CD8-positive, alpha-beta T cell (primary cell): ENCODE measurements at regions of chr1 and their contacts with region 1.

Region 1: GRCh38 chr1:44631647-44632539 is 42.4 kb downstream of the TMEM53 start:
- DNase-seq: peak; percentile 73 to 95 (median 88)
- ATAC-seq: peak; percentile 75
- H3K4me3 ChIP-seq: peak overlapping the region; percentile 55 to 82
- H3K4me3 Mint-ChIP-seq: peak overlapping the region; percentile 90
- H3K27ac ChIP-seq: peak overlapping the region; percentile 86 to 97
- H3K27ac Mint-ChIP-seq: peak overlapping the region; percentile 98
- H3K4me1 ChIP-seq: peaks cover 20% of the 10 kb centered on the region
- H3K4me1 Mint-ChIP-seq: peaks cover 48% of the 10 kb centered on the region
- H3K27me3 ChIP-seq: no peaks in the 10 kb centered on the region
- H3K27me3 Mint-ChIP-seq: no peaks in the 10 kb centered on the region
- CTCF ChIP-seq: no peak

Region 2: DNA sequence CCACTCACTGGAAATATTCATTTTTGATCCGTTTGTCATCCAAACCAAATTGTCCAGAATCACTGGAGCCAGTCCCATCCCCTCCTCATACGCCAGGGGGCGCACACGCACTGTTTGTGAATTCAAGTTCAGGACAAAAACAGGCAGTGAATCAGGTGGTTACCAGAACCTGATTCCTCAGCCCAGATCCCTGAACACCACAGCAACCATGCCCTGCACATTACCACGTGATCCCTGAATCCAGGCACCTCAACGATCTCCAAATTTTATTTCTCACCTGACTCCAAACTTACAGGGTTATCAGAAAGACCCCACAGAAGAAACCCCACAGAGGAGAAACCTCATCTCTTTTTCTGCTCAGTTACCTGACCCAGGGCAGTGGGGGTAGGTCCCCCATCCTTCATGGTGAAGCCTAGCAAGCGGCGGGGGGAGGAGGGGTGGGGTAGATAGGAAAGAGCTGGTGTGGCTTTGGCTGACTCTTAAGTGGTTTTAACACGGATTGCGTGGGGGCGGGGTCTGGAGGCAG is 1102.6 kb before region 1 on chr1:
- CTCF ChIA-PET with region 1: no interaction called
- POLR2A ChIA-PET with region 1: no interaction called
- intact Hi-C with region 1: no loop called
- DNase-seq: peak; percentile 60 to 89 (median 80)
- ATAC-seq: peak; percentile 65
- H3K4me3 ChIP-seq: no peak overlapping the region
- H3K4me3 Mint-ChIP-seq: peak overlapping the region; percentile 88
- H3K27ac ChIP-seq: no peak overlapping the region
- H3K27ac Mint-ChIP-seq: no peak overlapping the region
- H3K4me1 ChIP-seq: peaks cover 15% of the 10 kb centered on the region
- H3K4me1 Mint-ChIP-seq: peaks cover 21% of the 10 kb centered on the region
- H3K27me3 ChIP-seq: peaks cover 14% of the 10 kb centered on the region in 2 experiments
- H3K27me3 Mint-ChIP-seq: peaks cover 41% of the 10 kb centered on the region
- CTCF ChIP-seq: peak; percentile 96

Region 3: DNA sequence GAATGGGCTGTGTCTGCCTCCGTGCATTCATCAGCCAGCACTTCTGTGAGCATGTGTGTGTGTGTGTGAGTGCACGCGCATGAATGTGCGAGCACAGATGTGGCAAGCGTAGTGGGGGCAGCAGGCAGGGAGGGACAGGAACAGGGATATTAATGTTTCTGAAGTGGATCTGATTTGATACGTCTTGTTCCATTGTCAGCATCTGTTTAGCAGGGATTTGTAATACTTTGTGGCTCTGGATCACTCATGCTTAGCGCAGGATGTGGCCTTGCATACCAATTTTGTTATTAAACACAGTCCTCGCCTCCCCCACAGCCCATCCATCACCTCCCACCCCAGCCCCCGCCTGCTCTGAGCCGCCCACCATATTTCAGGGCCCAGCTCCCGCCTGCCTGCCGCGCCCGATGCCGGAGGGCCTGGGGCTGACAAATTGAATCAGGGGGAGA is 10.0 kb before region 1 on chr1:
- CTCF ChIA-PET with region 1: no interaction called
- POLR2A ChIA-PET with region 1: no interaction called
- intact Hi-C with region 1: no loop called
- DNase-seq: no peak
- ATAC-seq: no peak
- H3K4me3 ChIP-seq: no peak overlapping the region
- H3K4me3 Mint-ChIP-seq: no peak overlapping the region
- H3K27ac ChIP-seq: no peak overlapping the region
- H3K27ac Mint-ChIP-seq: no peak overlapping the region
- H3K4me1 ChIP-seq: no peaks in the 10 kb centered on the region
- H3K4me1 Mint-ChIP-seq: no peaks in the 10 kb centered on the region
- H3K27me3 ChIP-seq: no peaks in the 10 kb centered on the region
- H3K27me3 Mint-ChIP-seq: no peaks in the 10 kb centered on the region
- CTCF ChIP-seq: no peak

Region 4: GRCh38 chr1:44646261-44647110 is 14.6 kb after region 1 on chr1:
- CTCF ChIA-PET with region 1: interaction called, 54 read pairs
- POLR2A ChIA-PET with region 1: interaction called, 12 read pairs
- intact Hi-C with region 1: no loop called
- DNase-seq: no peak
- ATAC-seq: no peak
- H3K4me3 ChIP-seq: no peak overlapping the region
- H3K4me3 Mint-ChIP-seq: no peak overlapping the region
- H3K27ac ChIP-seq: no peak overlapping the region
- H3K27ac Mint-ChIP-seq: no peak overlapping the region
- H3K4me1 ChIP-seq: no peaks in the 10 kb centered on the region
- H3K4me1 Mint-ChIP-seq: no peaks in the 10 kb centered on the region
- H3K27me3 ChIP-seq: no peaks in the 10 kb centered on the region
- H3K27me3 Mint-ChIP-seq: no peaks in the 10 kb centered on the region
- CTCF ChIP-seq: no peak

Region 5: GRCh38 chr1:44730741-44731512 is 99.0 kb after region 1 on chr1 and contains the start of gene RNU5D-1:
- CTCF ChIA-PET with region 1: no interaction called
- POLR2A ChIA-PET with region 1: no interaction called
- intact Hi-C with region 1: no loop called
- DNase-seq: peak; percentile 86 to 96 (median 94)
- ATAC-seq: peak; percentile 75
- H3K4me3 ChIP-seq: peak within 1 kb of the TSS; percentile 36 to 47
- H3K4me3 Mint-ChIP-seq: peak within 1 kb of the TSS; percentile 84
- H3K27ac ChIP-seq: peak within 1 kb of the TSS; percentile 98 to 99
- H3K27ac Mint-ChIP-seq: peak within 1 kb of the TSS; percentile 100
- H3K4me1 ChIP-seq: peaks cover 14% of the 10 kb centered on the region
- H3K4me1 Mint-ChIP-seq: peaks cover 36% of the 10 kb centered on the region
- H3K27me3 ChIP-seq: no peaks in the 10 kb centered on the region
- H3K27me3 Mint-ChIP-seq: no peaks in the 10 kb centered on the region
- CTCF ChIP-seq: peak; percentile 93
- total RNA-seq, gene RNU5D-1: not detected